ENCODE measurements at regions of chr4 and their contacts with region 1.

Region 1: GRCh38 chr4:70734168-70734954 is 12.6 kb downstream of the RUFY3 start:
- DNase-seq: no peak
- ATAC-seq: peak; percentile 92
- H3K4me3 Mint-ChIP-seq: peak overlapping the region; percentile 78
- H3K27ac Mint-ChIP-seq: peak overlapping the region; percentile 88
- H3K4me1 Mint-ChIP-seq: peaks cover 32% of the 10 kb centered on the region
- H3K27me3 Mint-ChIP-seq: no peaks in the 10 kb centered on the region

Region 2: DNA sequence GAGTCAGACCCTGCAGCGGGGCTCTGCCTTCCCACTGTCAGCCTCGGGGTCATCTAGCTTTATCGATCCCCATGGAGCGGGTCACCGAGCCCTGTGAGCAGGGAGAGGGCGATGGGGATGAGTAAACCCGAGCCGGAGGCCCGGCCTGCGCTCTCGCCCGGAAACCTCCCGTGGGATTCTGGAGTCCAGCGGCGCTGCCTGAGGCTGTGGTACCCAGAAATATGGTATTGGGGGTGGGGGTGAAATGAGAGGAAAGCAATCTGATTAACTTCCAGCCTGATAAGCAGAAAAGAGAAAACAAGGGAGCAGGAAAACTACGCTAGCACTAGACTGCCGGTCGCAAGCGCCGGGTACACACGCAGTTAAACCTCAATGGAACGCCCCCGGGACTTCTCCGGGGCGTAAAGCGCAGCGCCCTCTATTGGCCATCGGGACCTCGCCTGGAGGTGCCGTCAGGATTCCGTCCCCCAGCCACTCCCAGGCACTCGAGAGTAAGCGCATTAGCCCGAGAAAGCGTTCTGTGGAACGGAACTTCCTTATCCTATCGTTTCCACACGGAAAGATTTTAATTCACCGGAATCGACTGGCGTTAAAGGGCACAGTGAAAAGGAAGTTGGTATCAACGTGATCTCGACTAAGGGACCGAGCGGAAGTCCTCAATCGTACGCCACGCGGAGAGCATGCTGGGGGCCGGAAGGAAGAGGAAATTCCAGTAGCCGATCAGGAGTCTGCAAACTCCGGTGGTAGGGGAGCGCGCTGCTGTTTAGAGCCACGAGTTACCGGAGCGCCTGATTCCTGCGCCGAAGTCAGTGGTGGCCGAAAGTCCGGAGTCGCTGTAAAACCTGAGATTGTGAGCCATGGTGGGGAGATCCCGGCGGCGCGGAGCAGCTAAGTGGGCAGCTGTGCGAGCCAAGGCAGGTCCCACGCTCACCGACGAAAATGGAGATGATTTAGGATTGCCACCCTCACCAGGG is 46.3 kb before region 1 on chr4 and contains the start of gene UTP3:
- POLR2A ChIA-PET with region 1: interaction called, 10 read pairs
- DNase-seq: peak; percentile 91
- ATAC-seq: peak; percentile 94
- H3K4me3 Mint-ChIP-seq: peak within 1 kb of the TSS; percentile 89
- H3K27ac Mint-ChIP-seq: peak within 1 kb of the TSS; percentile 96
- H3K4me1 Mint-ChIP-seq: peaks cover 28% of the 10 kb centered on the region
- H3K27me3 Mint-ChIP-seq: no peaks in the 10 kb centered on the region
- total RNA-seq, gene UTP3: 35.7 to 39.1 TPM

Region 3: DNA sequence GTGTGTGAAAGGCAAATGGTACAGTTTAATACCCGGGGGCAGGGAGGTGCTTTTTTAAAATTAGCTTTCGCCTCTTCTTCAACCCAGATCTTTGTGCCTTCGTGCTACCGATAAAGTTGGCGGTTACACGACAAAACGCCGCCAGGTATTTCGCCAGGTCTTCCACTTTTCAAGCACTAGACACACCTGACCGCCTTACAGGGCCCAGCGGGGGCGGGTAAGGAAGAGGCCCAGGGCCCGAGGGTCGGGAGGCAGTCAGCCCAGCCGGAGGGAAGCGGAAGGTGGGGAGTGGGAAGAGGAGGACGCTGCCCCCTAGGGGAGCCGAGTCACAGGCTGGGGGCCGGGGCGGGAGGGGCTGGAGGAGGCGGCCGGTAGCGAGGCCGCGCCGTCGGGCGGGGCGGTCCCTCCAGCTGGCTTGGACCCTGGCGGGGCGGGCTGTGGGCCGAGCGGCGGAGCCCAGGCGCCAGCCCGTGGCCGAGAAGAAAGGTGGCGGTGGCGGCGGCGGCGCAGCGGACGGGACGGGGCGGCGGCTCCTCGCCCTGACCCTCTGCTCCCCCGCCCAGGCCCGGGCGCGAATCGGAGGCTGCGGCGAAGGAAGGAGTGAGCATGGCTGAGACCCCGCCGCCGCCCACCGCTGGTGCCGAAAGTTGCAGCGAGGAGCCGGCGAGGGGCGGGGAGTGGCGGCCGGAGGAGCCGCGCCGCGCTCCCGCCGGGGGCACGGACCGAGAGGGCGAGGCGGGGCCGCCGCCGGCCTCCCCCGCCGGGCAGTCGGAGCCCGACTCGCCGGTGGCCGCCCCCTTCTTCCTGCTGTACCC is 29.8 kb before region 1 on chr4:
- POLR2A ChIA-PET with region 1: interaction called, 59 read pairs
- DNase-seq: peak; percentile 72
- ATAC-seq: peak; percentile 51
- H3K4me3 Mint-ChIP-seq: peak overlapping the region; percentile 94
- H3K27ac Mint-ChIP-seq: peak overlapping the region; percentile 93
- H3K4me1 Mint-ChIP-seq: peaks cover 26% of the 10 kb centered on the region
- H3K27me3 Mint-ChIP-seq: no peaks in the 10 kb centered on the region

Region 4: DNA sequence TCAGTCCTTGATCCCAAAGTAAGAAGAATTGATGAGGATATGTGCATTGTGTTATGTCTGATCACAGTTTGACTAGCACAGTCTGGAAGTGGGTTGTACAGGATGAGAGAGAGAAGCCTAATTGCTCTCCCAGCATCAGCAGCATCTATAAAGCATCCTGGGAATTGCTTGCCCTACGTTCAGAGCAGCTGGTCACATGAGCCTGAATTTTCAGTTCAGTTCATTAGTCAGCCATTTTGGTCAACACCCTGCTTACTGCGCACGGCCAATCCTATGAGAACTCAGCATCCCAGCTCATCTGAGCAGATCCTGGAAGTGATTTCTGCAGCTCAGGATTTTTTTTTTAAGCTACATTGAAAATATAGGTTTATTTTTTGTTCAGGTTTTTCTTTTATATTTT is 12.6 kb before region 1 on chr4 and contains the start of gene RUFY3:
- POLR2A ChIA-PET with region 1: interaction called, 13 read pairs
- DNase-seq: no peak
- ATAC-seq: no peak
- H3K4me3 Mint-ChIP-seq: peak within 1 kb of the TSS; percentile 4
- H3K27ac Mint-ChIP-seq: no peak within 1 kb of the TSS
- H3K4me1 Mint-ChIP-seq: peaks cover 22% of the 10 kb centered on the region
- H3K27me3 Mint-ChIP-seq: no peaks in the 10 kb centered on the region
- total RNA-seq, gene RUFY3: 38.0 to 38.5 TPM

Region 5: GRCh38 chr4:70839589-70840093 is 105.3 kb after region 1 on chr4 and contains the start of gene GRSF1:
- POLR2A ChIA-PET with region 1: interaction called, 35 read pairs
- DNase-seq: peak; percentile 95
- ATAC-seq: peak; percentile 90
- H3K4me3 Mint-ChIP-seq: peak within 1 kb of the TSS; percentile 97
- H3K27ac Mint-ChIP-seq: peak within 1 kb of the TSS; percentile 94
- H3K4me1 Mint-ChIP-seq: peaks cover 22% of the 10 kb centered on the region
- H3K27me3 Mint-ChIP-seq: no peaks in the 10 kb centered on the region
- total RNA-seq, gene GRSF1: 58.6 to 61.0 TPM

Region 6: GRCh38 chr4:71074452-71075299 is 340.3 kb after region 1 on chr4:
- POLR2A ChIA-PET with region 1: no interaction called
- DNase-seq: no peak
- ATAC-seq: no peak
- H3K4me3 Mint-ChIP-seq: no peak overlapping the region
- H3K27ac Mint-ChIP-seq: no peak overlapping the region
- H3K4me1 Mint-ChIP-seq: peaks cover 1% of the 10 kb centered on the region
- H3K27me3 Mint-ChIP-seq: peaks cover 18% of the 10 kb centered on the region